ENCODE measurements at regions of chr14 and their contacts with region 1.

Region 1: DNA sequence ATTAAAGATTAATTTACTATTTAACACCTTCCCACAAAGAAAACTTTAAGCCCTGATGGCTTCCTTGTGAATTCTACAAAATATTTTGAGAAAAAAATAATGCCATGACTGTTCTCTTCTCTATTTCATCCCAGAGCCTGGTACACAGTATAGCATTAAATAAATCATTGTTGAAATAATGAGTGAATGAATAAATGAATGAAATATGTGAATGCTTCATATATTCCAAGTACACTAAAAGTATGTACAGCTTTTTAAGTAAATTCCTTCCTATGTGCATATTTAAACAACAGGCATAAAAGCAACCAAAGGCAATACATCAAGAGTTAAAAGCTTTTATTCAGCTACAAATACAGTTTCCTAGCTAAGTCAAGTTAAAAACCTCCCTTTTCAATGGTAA is 144.9 kb upstream of the CCDC196 start:
- DNase-seq: no peak
- ATAC-seq: no peak

Region 2: DNA sequence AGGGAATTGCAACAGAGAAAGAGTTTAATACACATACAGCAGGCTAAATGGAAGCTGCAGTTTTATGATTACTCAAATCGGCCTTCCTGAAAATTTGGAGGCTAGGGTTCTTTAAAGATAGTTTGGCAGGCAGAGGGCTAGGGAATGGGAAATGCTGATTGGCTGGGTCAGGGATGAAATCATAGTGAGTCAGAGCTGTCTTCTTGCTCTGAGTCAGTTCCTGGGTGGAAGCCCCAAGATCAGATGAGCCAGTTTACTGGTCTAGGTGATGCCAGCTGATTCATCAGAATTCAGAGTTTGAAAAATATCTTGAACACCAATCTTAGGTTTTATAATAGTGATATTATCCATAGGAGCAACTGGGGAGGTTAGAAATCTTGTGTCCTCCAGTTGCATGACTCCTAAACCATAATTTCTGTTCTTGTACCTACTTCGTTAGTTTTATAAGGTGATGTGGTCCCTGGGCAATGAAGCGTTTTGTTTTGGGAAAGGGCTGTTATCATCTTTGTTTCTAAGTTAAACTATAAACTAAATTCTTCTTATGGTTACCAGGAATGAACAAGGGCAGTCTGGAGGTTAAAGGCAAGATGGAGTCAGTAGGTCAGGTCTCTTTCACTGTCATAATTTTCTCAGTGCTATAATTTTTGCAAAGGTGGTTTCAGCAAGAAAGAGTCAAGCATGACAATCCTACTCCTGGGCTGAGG is 112.8 kb before region 1 on chr14:
- intact Hi-C with region 1: no loop called
- DNase-seq: no peak
- ATAC-seq: no peak

Region 3: GRCh38 chr14:66330219-66330618 is 11.0 kb before region 1 on chr14:
- intact Hi-C with region 1: loop called (anchors 2 kb)
- DNase-seq: no peak
- ATAC-seq: no peak

Region 4: DNA sequence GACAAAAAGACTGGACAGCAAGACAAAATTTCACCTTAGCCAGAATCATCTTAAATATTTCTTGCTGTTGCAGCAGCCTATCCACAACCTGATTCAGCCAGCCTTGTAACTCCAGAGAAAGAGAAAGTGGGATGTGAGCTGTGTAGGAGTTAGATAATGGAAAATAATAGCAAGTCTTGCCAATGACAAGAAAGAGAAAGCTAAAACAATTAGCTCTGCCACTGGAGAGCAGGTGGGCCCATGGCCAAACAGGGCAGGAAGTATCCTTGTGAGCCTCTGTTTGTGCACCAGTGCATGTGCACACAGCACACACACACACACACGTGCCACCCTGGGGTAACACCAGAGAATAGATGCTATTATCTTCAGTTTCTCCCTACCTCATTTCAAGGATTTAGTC is 38.9 kb after region 1 on chr14:
- intact Hi-C with region 1: no loop called
- DNase-seq: no peak
- ATAC-seq: peak; percentile 16

Measured in Right ventricle myocardium inferior (tissue), 1 donor.